ENCODE measurements at regions of chr7 and their contacts with region 1.

Region 1: DNA sequence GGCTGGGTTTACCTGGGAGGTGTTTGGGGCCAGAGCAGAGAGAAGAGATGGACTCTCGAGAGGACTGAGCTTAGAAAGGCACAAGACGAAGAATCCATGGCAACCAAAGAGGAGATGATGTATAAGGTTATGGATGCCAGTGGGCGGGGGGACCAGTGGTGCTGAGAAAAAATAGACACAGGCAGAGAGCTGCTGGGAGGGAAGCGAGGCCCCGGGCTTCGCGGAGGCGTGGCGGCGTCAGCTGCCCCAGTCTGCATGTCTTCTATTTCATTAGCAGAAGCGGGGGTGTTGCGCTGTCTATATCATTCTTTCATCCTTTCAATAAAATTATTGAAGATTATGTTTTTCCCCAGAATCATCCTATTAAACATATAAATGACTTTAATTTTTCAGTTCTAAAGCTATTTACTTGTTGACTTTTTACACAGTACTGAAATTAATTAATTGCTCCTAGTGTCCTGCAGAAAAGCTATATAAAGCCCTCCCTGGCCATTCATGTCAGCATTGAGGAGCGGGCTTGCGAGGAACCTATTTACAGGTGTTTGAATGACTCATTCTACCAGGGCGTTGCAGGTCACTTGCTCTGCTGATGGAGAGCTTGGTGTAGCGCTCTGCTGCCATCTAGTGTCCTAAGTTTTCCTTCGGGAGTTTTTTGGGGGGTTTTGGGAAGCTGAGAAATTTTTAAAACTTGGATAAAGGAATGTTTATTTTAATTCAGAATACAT is 42.9 kb upstream of the BHLHA15 start:
- DNase-seq: peak; percentile 74 to 79
- H3K4me3 ChIP-seq: no peak overlapping the region
- H3K27ac ChIP-seq: no peak overlapping the region
- H3K4me1 ChIP-seq: peaks cover 18% of the 10 kb centered on the region
- H3K27me3 ChIP-seq: no peaks in the 10 kb centered on the region
- CTCF ChIP-seq: peak; percentile 91

Region 2: DNA sequence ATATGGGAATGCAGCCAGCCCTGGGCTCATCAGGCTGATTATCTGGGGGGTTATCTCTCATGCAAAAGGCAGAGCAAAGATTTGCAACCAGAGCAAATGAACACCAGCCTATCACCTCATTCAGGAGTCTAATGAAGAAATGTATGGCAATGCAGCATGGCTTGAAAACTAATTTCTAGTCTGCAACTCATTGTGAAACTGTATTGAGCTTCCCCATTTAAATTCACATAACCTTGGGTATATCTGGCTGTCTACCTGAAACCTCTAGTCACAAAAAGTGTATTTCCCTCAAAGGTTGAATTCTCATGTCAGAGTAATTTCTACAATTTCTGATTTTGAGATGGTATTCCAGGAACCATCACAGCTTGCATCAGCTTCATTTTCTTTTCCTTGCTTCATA is 810.9 kb before region 1 on chr7:
- CTCF ChIA-PET with region 1: interaction called, 14 read pairs
- POLR2A ChIA-PET with region 1: no interaction called
- intact Hi-C with region 1: no loop called
- DNase-seq: no peak
- H3K4me3 ChIP-seq: no peak overlapping the region
- H3K27ac ChIP-seq: no peak overlapping the region
- H3K4me1 ChIP-seq: no peaks in the 10 kb centered on the region
- H3K27me3 ChIP-seq: peaks cover 25% of the 10 kb centered on the region
- CTCF ChIP-seq: no peak

Region 3: GRCh38 chr7:98021588-98022351 is 146.6 kb before region 1 on chr7:
- CTCF ChIA-PET with region 1: interaction called, 33 read pairs
- POLR2A ChIA-PET with region 1: no interaction called
- intact Hi-C with region 1: loop called (anchors 1 kb)
- DNase-seq: peak; percentile 55 to 85
- H3K4me3 ChIP-seq: no peak overlapping the region
- H3K27ac ChIP-seq: no peak overlapping the region
- H3K4me1 ChIP-seq: no peaks in the 10 kb centered on the region
- H3K27me3 ChIP-seq: no peaks in the 10 kb centered on the region
- CTCF ChIP-seq: peak; percentile 94

Region 4: DNA sequence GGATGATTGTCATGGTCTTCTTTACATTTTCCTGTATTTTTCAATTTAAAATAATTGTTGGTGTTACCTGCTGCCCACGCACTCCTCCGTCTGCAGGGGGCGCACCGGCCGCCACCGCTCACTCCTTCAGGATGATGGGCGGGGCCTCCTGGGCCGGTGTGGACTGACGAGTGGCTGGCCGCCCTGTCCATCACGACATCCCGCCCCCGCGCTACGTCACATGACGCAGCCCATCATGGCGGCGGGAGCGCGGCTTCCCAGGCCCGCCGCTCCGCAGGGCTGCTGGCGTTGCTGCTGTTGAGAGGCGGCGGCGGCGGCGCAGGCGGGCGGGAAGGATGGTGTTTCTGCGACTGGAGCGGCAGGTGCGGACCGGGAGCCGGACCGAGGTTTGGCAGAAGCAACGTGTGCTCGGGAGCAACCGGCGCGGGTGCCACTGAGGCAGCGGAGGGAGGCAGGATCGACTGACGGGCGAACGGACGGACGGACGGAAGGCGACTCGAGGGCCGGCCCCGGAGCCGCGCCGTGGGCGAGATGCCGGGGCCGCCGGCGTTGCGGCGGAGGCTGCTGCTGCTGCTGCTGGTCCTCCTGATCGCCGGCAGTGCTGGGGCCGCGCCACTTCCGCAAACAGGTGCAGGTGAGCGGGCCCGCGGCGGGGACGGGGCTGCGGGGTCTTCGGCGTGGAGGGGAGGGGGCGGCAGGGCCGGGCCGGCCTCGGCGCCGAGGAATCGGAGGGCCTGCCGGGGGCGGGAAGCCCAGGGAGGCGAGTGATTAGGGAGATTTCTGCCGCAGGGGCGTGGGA is 61.5 kb before region 1 on chr7 and contains the start of gene LMTK2:
- CTCF ChIA-PET with region 1: interaction called, 14 read pairs
- POLR2A ChIA-PET with region 1: interaction called, 4 read pairs
- intact Hi-C with region 1: loop called (anchors 1 kb)
- DNase-seq: peak; percentile 69 to 98
- H3K4me3 ChIP-seq: peak within 1 kb of the TSS; percentile 76
- H3K27ac ChIP-seq: peak within 1 kb of the TSS; percentile 54
- H3K4me1 ChIP-seq: peaks cover 40% of the 10 kb centered on the region
- H3K27me3 ChIP-seq: no peaks in the 10 kb centered on the region
- CTCF ChIP-seq: peak; percentile 84
- total RNA-seq, gene LMTK2: 33.3 and 37.1 TPM in 2 replicates

Region 5: DNA sequence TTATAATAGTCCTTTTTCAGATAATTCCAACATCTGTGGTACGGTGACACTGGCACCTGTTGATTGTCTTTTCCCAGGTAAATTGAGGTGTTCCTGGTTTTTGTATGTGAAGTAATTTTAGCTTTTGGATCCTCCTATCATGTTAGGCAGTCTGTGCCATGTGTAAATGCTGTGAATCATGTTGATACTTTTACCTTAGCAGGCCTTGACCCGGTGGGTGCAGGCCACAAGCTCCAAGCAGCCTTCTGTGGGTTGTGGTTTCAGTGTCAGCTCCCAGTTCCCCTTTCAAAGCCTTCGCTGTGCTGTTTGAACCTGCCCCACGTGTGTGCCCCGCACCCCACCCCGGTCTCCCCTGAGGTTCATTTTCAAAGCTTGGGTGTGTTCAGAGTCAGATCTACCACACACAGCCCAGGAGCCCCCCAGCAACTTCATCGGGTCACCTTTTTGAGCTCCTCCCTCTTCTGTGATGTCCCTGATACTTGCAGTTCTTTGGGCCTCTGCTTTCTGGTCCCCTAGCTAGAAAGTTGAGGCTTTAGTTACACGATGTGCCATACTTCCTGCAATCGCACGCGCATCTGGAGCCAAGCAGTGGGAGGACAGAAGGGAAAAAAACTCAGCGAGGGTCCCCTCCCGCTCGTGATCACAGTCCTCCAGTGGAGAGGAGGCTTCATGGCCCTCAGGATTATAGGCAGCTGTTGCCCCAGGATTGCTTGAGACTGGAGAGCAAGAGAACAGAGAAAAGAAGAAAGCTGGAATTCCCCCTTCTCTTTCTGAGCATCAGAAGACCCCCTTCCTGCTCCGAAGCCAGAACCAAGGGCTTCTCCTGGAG is 34.2 kb after region 1 on chr7:
- CTCF ChIA-PET with region 1: no interaction called
- POLR2A ChIA-PET with region 1: no interaction called
- intact Hi-C with region 1: no loop called
- DNase-seq: no peak
- H3K4me3 ChIP-seq: no peak overlapping the region
- H3K27ac ChIP-seq: no peak overlapping the region
- H3K4me1 ChIP-seq: no peaks in the 10 kb centered on the region
- H3K27me3 ChIP-seq: no peaks in the 10 kb centered on the region
- CTCF ChIP-seq: no peak

Measured in PC-9 (cell line).